Posterior cingulate gyrus (tissue), 11 donors: ENCODE measurements at regions of chr15 and their contacts with region 1.

Region 1: GRCh38 chr15:90209591-90209990 is 8.5 kb downstream of the SEMA4B start:
- DNase-seq: peak in 1 of 10 donors; percentile 30

Region 2: GRCh38 chr15:90161950-90162361 is 47.6 kb before region 1 on chr15:
- intact Hi-C with region 1: loop called (anchors 5 kb)
- DNase-seq: peak in 2 of 10 donors; percentile 36 to 56